Motor neuron (in vitro differentiated cells): ENCODE measurements at regions of chr13 and their contacts with region 1.

Region 1: DNA sequence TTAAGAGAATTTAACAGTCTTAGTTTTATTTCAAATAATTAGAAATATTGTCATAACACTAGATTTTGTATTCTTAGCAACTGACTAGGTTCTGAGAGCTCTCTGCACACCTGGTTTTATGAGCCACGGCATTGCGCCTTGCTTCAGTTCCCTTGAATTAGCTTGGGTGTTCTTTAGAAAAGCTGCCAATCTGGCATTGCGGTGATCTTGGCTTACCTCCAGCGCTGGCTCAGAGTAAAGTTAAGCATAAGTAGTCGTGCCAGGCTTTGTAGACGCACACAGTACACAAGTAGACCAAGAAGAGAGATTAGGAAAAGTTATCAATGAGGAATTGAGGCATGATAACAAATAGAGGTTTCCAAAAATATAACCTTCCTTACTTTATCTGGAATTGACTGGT is 45.7 kb downstream of the TPP2 start:
- ATAC-seq: no peak
- H3K4me3 ChIP-seq: no peak overlapping the region
- H3K27ac ChIP-seq: no peak overlapping the region
- H3K4me1 ChIP-seq: no peaks in the 10 kb centered on the region

Region 2: GRCh38 chr13:102548811-102549210 is 93.7 kb before region 1 on chr13:
- in situ Hi-C with region 1: no loop called
- ATAC-seq: no peak
- H3K4me3 ChIP-seq: no peak overlapping the region
- H3K27ac ChIP-seq: no peak overlapping the region
- H3K4me1 ChIP-seq: no peaks in the 10 kb centered on the region

Region 3: GRCh38 chr13:102798581-102799425 is 156.3 kb after region 1 on chr13 and contains the starts of genes BIVM and POGLUT2:
- in situ Hi-C with region 1: loop called in 1 of 9 experiments (anchors 10 kb)
- ATAC-seq: peak; percentile 85 to 95 (median 93)
- H3K4me3 ChIP-seq: peak within 1 kb of the TSS; percentile 91 to 99 (median 94)
- H3K27ac ChIP-seq: peak within 1 kb of the TSS in 1 of 2 donors; percentile 8
- H3K4me1 ChIP-seq: peaks cover 0 to 17% of the 10 kb centered on the region in 2 donors
- total RNA-seq, gene BIVM: 12.0 to 25.6 (median 15.3) TPM
- total RNA-seq, gene POGLUT2: 4.1 to 15.5 (median 12.6) TPM